Activated CD4-positive, alpha-beta memory T cell treated with anti-CD3 and anti-CD28 coated beads for 36 hours (primary cell): ENCODE measurements at regions of chr18 and their contacts with region 1.

Region 1: GRCh38 chr18:46756559-46757201 is at the start of gene ST8SIA5:
- DNase-seq: no peak
- H3K4me3 Mint-ChIP-seq: peak within 1 kb of the TSS; percentile 31
- H3K27ac Mint-ChIP-seq: no peak within 1 kb of the TSS
- H3K4me1 Mint-ChIP-seq: peaks cover 11% of the 10 kb centered on the region
- H3K27me3 Mint-ChIP-seq: peaks cover 58% of the 10 kb centered on the region
- total RNA-seq, gene ST8SIA5: not detected

Region 2: DNA sequence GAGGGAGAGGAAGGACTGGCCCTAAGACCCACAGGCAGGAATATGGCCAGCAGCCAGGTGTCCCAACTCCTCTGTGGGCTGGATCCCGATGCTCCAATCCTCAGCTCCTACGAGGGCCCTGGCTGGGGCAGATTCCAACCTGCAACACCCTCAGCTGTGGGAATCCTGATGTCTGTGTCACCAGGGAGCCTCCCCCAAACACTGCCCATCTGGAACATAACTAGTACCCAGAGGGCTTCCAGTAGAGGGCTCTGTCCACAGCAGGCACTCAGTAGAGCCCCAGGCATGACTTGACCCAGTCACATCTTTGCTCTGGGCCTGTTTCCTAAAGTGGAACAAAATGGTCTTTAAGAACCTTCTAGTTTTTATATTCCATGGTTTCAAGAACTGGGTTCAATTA is 79.1 kb before region 1 on chr18:
- CTCF ChIA-PET with region 1: no interaction called
- POLR2A ChIA-PET with region 1: no interaction called
- intact Hi-C with region 1: loop called (anchors 5 kb)
- DNase-seq: no peak
- H3K4me3 Mint-ChIP-seq: no peak overlapping the region
- H3K27ac Mint-ChIP-seq: no peak overlapping the region
- H3K4me1 Mint-ChIP-seq: peaks cover 4% of the 10 kb centered on the region
- H3K27me3 Mint-ChIP-seq: peaks cover 2% of the 10 kb centered on the region

Region 3: GRCh38 chr18:46728219-46728930 is 28.3 kb before region 1 on chr18:
- CTCF ChIA-PET with region 1: no interaction called
- POLR2A ChIA-PET with region 1: no interaction called
- intact Hi-C with region 1: no loop called
- DNase-seq: no peak
- H3K4me3 Mint-ChIP-seq: no peak overlapping the region
- H3K27ac Mint-ChIP-seq: no peak overlapping the region
- H3K4me1 Mint-ChIP-seq: no peaks in the 10 kb centered on the region
- H3K27me3 Mint-ChIP-seq: no peaks in the 10 kb centered on the region